HEK293 (cell line): ENCODE measurements at regions of chr15 and their contacts with region 1.

Region 1: GRCh38 chr15:93087825-93088199 is 1.2 kb downstream of the RGMA start:
- H3K4me3 ChIP-seq: peak overlapping the region; percentile 50
- H3K27ac ChIP-seq: peak overlapping the region; percentile 72; the same call in 1 of the 2 replicates
- H3K4me1 ChIP-seq: no peaks in the 10 kb centered on the region; the same call in 1 of the 2 replicates
- CTCF ChIP-seq: peak; percentile 79

Region 2: DNA sequence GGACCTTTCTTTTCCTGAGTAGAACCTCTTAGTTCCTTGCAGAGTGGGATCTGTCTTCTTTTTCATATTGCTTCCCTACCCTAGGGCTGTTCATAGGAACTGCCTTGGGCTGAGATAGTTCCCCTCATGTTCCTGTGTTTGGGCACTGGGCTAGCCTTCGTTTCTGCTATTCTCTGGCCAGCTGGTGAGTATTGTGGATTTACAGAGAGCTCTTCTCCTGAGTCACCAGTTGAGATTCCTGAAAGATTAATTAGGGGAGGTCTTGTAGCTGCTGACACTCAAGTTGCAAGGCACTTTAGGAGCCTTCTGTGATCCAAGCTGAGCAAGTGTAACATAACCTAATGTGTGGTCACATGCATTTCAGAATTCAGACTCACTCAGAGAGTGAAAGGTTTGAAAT is 157.0 kb before region 1 on chr15:
- CTCF ChIA-PET with region 1: no interaction called
- POLR2A ChIA-PET with region 1: no interaction called
- H3K4me3 ChIP-seq: no peak overlapping the region
- H3K27ac ChIP-seq: peak overlapping the region; percentile 32
- H3K4me1 ChIP-seq: no peaks in the 10 kb centered on the region
- CTCF ChIP-seq: no peak

Region 3: GRCh38 chr15:93035953-93036800 is 51.6 kb before region 1 on chr15:
- CTCF ChIA-PET with region 1: interaction called, 16 read pairs
- POLR2A ChIA-PET with region 1: no interaction called
- H3K4me3 ChIP-seq: no peak overlapping the region
- H3K27ac ChIP-seq: no peak overlapping the region
- H3K4me1 ChIP-seq: no peaks in the 10 kb centered on the region
- CTCF ChIP-seq: peak; percentile 87

Region 4: DNA sequence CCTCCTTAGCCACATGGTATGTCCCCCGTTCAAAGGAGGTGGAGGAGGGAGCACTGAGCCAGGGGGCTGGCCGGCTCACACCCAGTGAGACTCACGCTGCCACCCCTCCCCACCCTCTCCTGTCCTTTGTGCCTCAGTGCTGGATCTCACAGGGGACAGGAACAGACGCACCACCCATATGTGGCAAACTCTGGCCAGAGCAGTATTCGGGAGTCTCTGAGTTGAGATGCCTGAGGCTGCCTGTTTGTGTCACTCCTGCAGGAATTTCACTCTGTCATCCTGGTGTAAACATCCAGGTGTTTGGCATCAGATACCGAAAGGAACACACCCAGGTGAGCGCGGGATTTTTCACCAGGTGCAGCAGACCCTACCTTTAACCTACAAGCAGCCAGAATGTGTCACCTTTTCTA is 24.5 kb before region 1 on chr15:
- CTCF ChIA-PET with region 1: interaction called, 11 read pairs
- POLR2A ChIA-PET with region 1: interaction called, 3 read pairs
- H3K4me3 ChIP-seq: no peak overlapping the region
- H3K27ac ChIP-seq: no peak overlapping the region
- H3K4me1 ChIP-seq: peaks cover 25% of the 10 kb centered on the region
- CTCF ChIP-seq: no peak

Region 5: DNA sequence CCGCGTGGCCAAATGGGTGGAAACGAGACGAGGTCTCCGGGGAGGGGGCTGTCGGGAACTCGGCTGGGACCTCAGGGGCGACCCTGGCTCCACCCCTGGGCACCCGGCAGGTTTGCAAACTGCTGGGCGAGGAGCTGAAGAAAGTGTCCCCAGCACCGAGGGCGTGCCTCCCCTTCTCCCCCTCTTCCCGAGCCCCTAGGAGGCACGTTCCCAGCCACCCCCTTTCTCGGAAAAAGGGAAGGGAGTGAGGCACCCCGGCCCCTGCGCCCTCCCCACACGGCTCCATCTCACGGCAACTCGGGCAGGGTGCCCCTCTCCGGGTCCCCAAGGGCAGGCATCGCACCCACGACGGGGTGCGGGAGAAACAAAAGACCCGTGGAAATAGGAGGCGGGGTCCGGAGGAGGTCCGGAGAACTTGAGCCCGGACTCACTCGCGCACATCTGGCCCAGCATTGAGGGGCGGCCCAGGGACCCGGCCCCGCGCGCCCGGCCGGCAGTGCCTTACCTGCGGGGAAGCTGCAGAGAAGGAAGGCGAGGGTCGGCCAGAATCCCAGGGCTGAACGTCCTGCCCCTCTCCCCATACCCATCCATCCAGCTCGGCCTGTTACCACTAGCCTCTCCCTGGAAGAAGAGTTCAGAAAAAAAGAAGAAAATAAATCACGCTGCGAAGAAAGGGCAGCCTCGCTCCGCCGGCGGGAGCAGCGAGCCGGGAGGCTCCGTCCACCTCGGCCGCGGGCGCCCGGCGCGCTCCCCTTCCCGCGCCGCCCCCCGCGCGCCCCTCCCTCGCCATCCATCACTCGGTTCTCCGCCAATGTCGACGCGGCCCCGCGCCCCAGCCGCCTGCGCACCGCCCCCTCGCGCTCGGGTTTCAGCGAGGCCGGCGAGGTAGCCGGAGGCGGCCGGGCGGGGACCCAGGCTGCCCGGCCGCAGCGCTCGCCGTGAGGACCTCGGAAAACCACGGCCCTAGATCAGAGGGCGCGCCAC is 15.1 kb before region 1 on chr15:
- CTCF ChIA-PET with region 1: interaction called, 35 read pairs
- POLR2A ChIA-PET with region 1: interaction called, 5 read pairs
- H3K4me3 ChIP-seq: peak overlapping the region; percentile 72
- H3K27ac ChIP-seq: peak overlapping the region; percentile 87
- H3K4me1 ChIP-seq: peaks cover 40% of the 10 kb centered on the region
- CTCF ChIP-seq: peak; percentile 30; the same call in 1 of the 2 replicates

Region 6: DNA sequence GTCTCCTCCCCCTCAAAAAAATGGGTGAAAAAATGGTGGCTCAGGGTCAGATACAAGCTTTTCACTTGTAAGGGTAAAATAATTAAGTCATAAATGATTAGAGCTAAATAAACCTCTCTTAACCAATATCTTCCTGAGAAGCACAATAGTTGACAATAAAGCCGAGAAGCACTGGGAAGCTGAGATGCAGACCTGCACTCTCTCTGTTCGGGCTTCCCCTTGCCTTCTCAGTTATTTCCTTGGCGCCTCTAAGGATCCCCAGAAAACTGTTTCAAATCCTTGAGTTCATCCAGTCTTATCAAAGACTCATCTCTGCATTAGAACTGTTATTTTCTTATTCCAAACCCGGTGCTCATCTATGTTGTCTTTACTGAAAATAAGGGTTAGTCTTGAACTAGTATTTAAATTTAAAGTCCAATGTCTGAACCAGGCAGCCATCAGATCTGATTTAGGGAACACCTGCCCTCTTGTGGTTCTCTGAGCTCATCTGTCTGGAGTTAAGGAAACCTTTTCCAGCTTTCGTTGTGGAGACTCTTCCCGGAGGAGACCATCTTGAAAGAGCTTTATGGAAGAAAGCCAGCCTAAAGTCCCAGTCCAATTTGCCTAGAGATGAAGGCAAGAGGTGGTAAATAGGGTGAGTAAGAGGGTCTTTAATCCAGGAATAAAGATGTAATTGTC is 887.1 kb after region 1 on chr15:
- CTCF ChIA-PET with region 1: interaction called, 13 read pairs
- POLR2A ChIA-PET with region 1: no interaction called
- H3K4me3 ChIP-seq: no peak overlapping the region
- H3K27ac ChIP-seq: no peak overlapping the region
- H3K4me1 ChIP-seq: no peaks in the 10 kb centered on the region
- CTCF ChIP-seq: no peak